Activated B cell treated with CpG ODN at 0.5 μM for 24 hours (primary cell): ENCODE measurements at regions of chr11 and their contacts with region 1.

Region 1: GRCh38 chr11:66659763-66660162 is 17.9 kb downstream of the RBM4B start:
- DNase-seq: no peak
- ATAC-seq: peak; percentile 57
- H3K4me3 Mint-ChIP-seq: peak overlapping the region; percentile 55
- H3K27ac Mint-ChIP-seq: peak overlapping the region; percentile 74
- H3K4me1 Mint-ChIP-seq: peaks cover 39% of the 10 kb centered on the region
- H3K27me3 Mint-ChIP-seq: no peaks in the 10 kb centered on the region
- CTCF ChIP-seq: no peak

Region 2: GRCh38 chr11:66510271-66510989 is 149.3 kb before region 1 on chr11 and contains the start of gene BBS1:
- CTCF ChIA-PET with region 1: no interaction called
- POLR2A ChIA-PET with region 1: no interaction called
- intact Hi-C with region 1: no loop called
- DNase-seq: peak; percentile 82
- ATAC-seq: peak; percentile 98
- H3K4me3 Mint-ChIP-seq: peak within 1 kb of the TSS; percentile 91
- H3K27ac Mint-ChIP-seq: peak within 1 kb of the TSS; percentile 42
- H3K4me1 Mint-ChIP-seq: peaks cover 14% of the 10 kb centered on the region
- H3K27me3 Mint-ChIP-seq: no peaks in the 10 kb centered on the region
- CTCF ChIP-seq: no peak
- total RNA-seq, gene BBS1: 30.5 and 38.8 TPM in 2 replicates

Region 3: DNA sequence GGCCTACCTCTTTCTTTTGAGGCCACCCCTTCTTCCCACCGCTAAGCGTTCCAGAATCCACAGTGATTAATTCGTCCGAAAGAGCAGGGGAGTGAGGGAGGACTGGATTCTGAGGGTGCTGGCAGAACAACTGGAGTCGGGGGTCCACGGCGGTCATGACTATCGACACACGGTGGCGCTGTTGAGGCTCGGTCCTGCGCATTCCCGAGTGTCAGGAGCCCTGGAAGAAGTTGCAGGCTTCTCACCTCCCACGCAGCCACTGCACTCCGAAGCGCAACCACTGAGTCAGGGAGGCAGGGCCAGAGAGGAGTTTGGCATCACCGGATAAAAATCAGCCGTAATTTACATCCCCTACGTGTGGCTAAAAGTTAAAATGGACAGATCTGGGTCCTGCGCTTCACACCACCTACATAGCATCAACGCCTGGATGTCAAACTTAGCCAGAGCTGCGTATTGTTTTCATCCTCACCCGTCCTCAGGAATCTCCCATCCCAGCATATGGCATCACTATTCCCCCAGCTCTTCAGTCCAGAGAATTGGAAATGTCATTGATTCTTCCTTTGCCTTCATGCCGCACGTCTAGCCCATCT is 80.7 kb before region 1 on chr11:
- CTCF ChIA-PET with region 1: interaction called, 11 read pairs
- POLR2A ChIA-PET with region 1: interaction called, 6 read pairs
- intact Hi-C with region 1: no loop called
- DNase-seq: peak; percentile 76
- ATAC-seq: peak; percentile 88
- H3K4me3 Mint-ChIP-seq: no peak overlapping the region
- H3K27ac Mint-ChIP-seq: no peak overlapping the region
- H3K4me1 Mint-ChIP-seq: peaks cover 7% of the 10 kb centered on the region
- H3K27me3 Mint-ChIP-seq: peaks cover 13% of the 10 kb centered on the region
- CTCF ChIP-seq: peak; percentile 42

Region 4: GRCh38 chr11:66592457-66593302 is 67.1 kb before region 1 on chr11 and contains the starts of genes CCDC87 and CCS:
- CTCF ChIA-PET with region 1: interaction called, 7 read pairs
- POLR2A ChIA-PET with region 1: interaction called, 6 read pairs
- intact Hi-C with region 1: loop called (anchors 5 kb)
- DNase-seq: peak; percentile 98
- ATAC-seq: peak; percentile 97
- H3K4me3 Mint-ChIP-seq: peak within 1 kb of the TSS; percentile 100
- H3K27ac Mint-ChIP-seq: peak within 1 kb of the TSS; percentile 99
- H3K4me1 Mint-ChIP-seq: peaks cover 36% of the 10 kb centered on the region
- H3K27me3 Mint-ChIP-seq: no peaks in the 10 kb centered on the region
- CTCF ChIP-seq: no peak
- total RNA-seq, gene CCDC87: 0.22 and 0.31 TPM in 2 replicates
- total RNA-seq, gene CCS: 59.0 and 65.3 TPM in 2 replicates